ENCODE measurements at regions of chr19 and their contacts with region 1.

Region 1: DNA sequence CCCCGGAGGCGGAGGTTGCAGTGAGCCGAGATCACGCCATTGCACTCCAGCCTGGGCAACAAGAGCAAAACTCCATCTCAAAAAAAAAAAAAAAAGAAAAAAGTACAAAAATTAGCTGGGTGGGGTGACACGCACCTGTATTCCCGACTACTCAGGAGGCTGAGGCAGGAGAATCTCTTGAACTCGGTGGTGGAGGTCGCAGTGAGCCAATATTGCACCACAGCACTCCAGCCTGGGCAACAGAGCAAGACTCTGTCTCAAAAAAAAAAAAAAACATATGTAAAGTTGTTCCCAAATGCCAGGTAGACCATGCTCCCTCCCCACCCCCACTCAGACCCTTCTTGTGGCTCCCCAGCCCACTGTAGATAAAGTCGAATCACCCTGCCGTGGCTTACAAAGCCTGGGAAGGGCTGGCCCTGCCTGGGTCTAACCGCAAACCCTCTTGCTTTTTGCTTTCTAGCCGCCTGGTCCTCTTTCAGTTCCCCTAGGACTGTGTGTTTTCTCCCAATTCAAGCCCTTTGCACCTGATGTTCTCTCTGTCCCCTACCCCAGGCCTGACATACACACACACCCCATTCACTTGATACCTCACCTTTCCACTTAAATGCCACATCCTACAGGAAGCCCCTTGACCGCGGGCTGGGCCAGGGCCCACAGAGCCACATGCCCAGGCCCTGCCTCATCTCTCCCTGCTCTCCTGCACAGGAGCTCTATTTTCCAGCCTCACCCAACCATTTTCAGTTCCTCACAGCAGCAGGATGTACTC is 34.4 kb downstream of the MAP4K1 start:
- DNase-seq: no peak
- H3K4me3 ChIP-seq: no peak overlapping the region
- H3K27ac ChIP-seq: no peak overlapping the region
- H3K4me1 ChIP-seq: peaks cover 8% of the 10 kb centered on the region
- H3K27me3 ChIP-seq: no peaks in the 10 kb centered on the region
- CTCF ChIP-seq: no peak

Region 2: GRCh38 chr19:38496603-38497487 is 86.6 kb before region 1 on chr19:
- CTCF ChIA-PET with region 1: no interaction called
- dilution Hi-C with region 1: no loop called
- in situ Hi-C with region 1: no loop called
- intact Hi-C with region 1: no loop called
- DNase-seq: no peak
- H3K4me3 ChIP-seq: no peak overlapping the region
- H3K27ac ChIP-seq: no peak overlapping the region
- H3K4me1 ChIP-seq: no peaks in the 10 kb centered on the region
- H3K27me3 ChIP-seq: no peaks in the 10 kb centered on the region
- CTCF ChIP-seq: no peak

Region 3: DNA sequence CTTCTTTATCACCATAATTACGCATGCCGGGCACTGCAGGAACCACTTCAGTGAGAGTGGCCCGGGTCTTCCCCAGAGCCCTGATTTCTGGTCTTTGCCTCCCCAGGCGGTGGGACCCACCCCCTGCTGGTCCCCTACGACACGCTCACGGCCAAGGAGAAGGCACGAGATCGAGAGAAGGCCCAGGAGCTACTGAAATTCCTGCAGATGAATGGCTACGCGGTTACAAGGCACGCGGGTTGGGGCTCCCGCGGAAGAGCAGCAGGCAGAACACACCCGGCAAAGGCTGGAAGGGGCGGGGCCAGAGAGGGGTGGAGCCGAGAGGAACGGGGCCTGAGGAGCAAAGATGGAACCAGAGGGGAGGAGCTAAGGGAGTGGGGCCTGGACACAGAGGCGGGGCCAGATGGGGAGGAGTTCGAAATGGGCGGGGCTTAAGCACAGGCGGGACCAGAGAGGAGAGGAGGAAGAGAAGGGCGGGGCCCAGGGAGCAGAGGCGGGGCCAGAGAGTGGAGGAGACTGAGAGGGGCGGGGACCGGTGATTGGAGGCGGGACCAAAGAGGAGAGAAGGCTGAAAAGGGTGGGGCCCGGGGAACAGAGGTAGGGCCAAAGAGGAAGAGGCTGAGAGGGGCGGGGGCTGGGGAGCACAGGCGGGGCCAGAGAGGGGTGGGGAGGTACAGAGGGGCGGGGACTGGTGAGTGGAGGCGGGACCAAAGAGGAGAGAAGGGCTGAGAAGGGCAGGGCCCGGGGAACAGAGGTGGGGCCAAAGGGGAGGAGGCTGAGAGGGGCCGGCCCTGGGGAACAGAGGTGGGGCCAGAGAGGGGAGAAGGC is 76.5 kb before region 1 on chr19:
- CTCF ChIA-PET with region 1: no interaction called
- dilution Hi-C with region 1: no loop called
- in situ Hi-C with region 1: no loop called
- intact Hi-C with region 1: no loop called
- DNase-seq: peak; percentile 90
- H3K4me3 ChIP-seq: no peak overlapping the region
- H3K27ac ChIP-seq: no peak overlapping the region
- H3K4me1 ChIP-seq: peaks cover 5% of the 10 kb centered on the region
- H3K27me3 ChIP-seq: no peaks in the 10 kb centered on the region
- CTCF ChIP-seq: no peak

Region 4: DNA sequence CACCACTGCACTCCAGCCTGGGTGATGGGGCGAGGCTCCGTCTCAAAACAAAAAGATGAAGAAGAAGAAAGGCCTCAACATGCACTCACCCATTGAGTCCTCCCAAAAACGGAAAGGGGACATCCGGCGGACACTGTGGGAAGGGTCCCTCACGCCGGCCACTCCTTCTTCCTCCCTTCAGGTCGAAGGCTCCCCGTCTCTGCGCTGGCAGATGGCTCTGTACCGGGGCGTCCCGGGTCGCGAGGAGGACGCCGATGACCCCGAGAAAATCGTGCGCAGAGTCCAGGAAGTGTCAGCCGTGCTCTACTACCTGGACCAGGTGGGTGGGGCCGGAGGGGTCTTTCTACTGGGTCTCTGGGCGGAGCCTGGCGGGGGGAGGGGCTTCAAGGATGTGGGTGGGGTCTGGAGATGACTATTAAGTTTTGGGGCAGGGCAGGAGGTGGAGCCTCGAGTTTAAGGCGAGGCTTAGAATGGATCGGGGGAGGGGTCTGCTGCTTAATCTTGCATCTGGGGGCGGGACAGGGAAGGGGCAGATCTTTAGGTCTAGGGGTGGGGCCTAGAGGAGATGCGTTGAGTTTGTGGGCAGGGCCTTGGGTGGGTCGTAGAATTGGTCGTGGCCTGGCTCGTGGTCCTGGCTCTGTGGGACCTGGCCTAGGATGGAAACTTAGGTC is 55.8 kb before region 1 on chr19:
- CTCF ChIA-PET with region 1: no interaction called
- dilution Hi-C with region 1: loop called (anchors 5 kb)
- in situ Hi-C with region 1: no loop called
- intact Hi-C with region 1: no loop called
- DNase-seq: no peak
- H3K4me3 ChIP-seq: no peak overlapping the region
- H3K27ac ChIP-seq: no peak overlapping the region
- H3K4me1 ChIP-seq: no peaks in the 10 kb centered on the region
- H3K27me3 ChIP-seq: no peaks in the 10 kb centered on the region
- CTCF ChIP-seq: no peak

Region 5: DNA sequence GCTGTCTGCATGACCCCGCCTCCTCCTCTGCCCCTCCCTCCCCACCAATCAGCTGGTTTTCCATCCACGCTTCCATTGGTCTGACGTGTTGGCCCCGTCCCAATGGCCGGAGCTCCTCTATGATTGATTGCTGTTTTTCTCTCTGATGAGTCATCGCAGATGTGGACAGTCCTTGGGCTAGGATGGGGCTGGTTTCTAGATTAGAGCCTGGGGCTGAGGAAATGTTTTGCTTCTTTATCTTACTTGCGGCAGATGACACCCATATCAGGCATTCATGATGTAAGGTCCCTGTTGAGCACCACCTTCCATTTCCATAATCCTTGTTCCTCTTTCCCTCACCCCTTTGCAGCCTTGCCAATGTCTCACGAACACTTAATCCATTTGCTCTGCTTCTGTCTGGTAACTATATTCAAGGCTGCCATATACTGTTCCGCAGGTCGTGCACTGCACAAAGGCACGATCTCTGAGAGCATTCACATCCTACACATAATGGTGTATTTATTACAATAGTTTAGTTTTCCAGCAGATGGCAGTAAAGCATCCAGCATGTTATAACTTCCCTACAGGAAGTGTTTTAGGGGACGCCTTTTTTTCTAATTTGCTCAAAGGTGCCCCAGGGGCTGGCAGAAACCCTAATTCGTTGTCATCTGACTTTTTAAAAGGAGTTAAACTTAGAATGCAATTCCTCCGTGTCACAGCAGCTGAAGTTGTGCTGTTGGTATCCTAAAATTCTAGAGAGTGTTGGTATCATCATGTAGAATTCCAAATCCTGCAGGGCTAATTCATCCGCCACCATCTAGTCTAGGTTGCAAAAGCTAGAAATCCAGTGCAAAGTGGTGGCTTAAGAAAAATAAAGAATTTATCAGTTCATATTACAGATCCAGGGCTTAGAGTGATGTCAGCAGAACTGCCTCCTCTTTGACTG is 39.1 kb before region 1 on chr19:
- CTCF ChIA-PET with region 1: no interaction called
- dilution Hi-C with region 1: no loop called
- in situ Hi-C with region 1: no loop called
- intact Hi-C with region 1: no loop called
- DNase-seq: peak; percentile 93
- H3K4me3 ChIP-seq: peak overlapping the region in 2 of 3 experiments; percentile 10 to 27
- H3K27ac ChIP-seq: peak overlapping the region; percentile 45
- H3K4me1 ChIP-seq: peaks cover 16% of the 10 kb centered on the region
- H3K27me3 ChIP-seq: no peaks in the 10 kb centered on the region
- CTCF ChIP-seq: peak; percentile 69 to 73

Region 6: GRCh38 chr19:38606131-38606530 is 22.7 kb after region 1 on chr19:
- CTCF ChIA-PET with region 1: interaction called, 15 read pairs
- dilution Hi-C with region 1: no loop called
- in situ Hi-C with region 1: no loop called
- intact Hi-C with region 1: no loop called
- DNase-seq: no peak
- H3K4me3 ChIP-seq: no peak overlapping the region
- H3K27ac ChIP-seq: no peak overlapping the region
- H3K4me1 ChIP-seq: no peaks in the 10 kb centered on the region
- H3K27me3 ChIP-seq: no peaks in the 10 kb centered on the region
- CTCF ChIP-seq: no peak

Measured in mammary epithelial cell (primary cell).